Mammary epithelial cell (primary cell): ENCODE measurements at regions of chr6 and their contacts with region 1.

Region 1: GRCh38 chr6:44237813-44238433 is 9.0 kb upstream of the HSP90AB1 start:
- DNase-seq: peak; percentile 57
- H3K4me3 ChIP-seq: peak overlapping the region; percentile 30 to 67 (median 40)
- H3K27ac ChIP-seq: peak overlapping the region; percentile 50
- H3K4me1 ChIP-seq: peaks cover 52% of the 10 kb centered on the region
- H3K27me3 ChIP-seq: no peaks in the 10 kb centered on the region
- CTCF ChIP-seq: peak; percentile 62 to 96

Region 2: DNA sequence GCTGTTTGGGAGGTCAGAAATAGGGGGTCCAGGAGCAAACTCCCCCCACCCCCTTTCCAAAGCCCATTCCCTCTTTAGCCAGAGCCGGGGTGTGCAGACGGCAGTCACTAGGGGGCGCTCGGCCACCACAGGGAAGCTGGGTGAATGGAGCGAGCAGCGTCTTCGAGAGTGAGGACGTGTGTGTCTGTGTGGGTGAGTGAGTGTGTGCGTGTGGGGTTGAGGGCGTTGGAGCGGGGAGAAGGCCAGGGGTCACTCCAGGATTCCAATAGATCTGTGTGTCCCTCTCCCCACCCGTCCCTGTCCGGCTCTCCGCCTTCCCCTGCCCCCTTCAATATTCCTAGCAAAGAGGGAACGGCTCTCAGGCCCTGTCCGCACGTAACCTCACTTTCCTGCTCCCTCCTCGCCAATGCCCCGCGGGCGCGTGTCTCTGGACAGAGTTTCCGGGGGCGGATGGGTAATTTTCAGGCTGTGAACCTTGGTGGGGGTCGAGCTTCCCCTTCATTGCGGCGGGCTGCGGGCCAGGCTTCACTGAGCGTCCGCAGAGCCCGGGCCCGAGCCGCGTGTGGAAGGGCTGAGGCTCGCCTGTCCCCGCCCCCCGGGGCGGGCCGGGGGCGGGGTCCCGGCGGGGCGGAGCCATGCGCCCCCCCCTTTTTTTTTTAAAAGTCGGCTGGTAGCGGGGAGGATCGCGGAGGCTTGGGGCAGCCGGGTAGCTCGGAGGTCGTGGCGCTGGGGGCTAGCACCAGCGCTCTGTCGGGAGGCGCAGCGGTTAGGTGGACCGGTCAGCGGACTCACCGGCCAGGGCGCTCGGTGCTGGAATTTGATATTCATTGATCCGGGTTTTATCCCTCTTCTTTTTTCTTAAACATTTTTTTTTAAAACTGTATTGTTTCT is 468.2 kb before region 1 on chr6 and contains the start of gene VEGFA:
- CTCF ChIA-PET with region 1: no interaction called
- dilution Hi-C with region 1: no loop called
- in situ Hi-C with region 1: no loop called
- intact Hi-C with region 1: loop called (anchors 10 kb)
- DNase-seq: peak; percentile 84
- H3K4me3 ChIP-seq: peak within 1 kb of the TSS; percentile 97 to 98 (median 98)
- H3K27ac ChIP-seq: peak within 1 kb of the TSS; percentile 77
- H3K4me1 ChIP-seq: peaks cover 21% of the 10 kb centered on the region
- H3K27me3 ChIP-seq: no peaks in the 10 kb centered on the region
- CTCF ChIP-seq: peak; percentile 98
- total RNA-seq, gene VEGFA: 161 to 313 TPM

Region 3: DNA sequence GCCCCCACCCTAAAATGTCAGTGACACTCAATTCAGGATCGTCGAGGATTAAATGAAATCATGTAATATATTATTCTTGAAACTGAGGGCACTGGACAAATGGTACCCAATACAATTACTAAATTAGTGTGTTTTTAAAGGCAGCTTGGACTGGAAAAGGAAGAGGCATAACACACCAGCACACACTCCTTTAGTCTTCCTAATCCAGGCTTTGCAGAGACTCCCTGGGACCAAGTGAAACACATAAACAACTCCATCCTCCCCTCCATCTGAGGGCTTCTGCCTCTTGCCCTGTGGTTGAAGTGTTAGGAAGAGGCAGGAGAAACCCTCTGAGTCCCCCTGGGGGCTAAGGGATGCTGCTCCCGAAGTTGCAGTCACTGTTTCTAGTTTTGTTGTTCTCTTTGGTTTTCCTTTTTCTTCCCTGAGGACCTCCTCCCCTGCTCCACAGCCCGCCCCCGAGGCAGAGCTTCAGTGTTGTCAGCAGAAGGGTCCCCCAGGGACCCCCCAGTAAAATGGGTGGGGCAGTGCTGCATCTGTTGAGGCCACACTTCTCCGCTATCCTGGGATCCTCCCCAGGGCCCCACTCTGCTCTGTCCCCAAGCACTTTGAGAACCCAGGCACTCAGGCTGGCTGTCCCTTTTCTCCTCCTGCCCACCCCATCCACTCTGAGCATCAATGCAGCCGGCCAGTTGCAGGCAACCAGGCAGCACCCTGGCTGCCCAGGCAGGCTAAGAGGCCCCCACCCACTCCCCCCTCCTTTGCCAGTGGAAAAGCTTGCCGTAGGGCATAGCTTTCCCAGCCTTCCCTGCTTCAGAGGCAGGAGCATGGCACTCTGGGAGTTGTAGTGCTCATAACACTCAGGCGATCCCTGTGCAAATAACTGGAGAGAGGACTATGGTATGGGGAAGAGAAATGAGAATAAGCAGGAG is 104.7 kb before region 1 on chr6:
- CTCF ChIA-PET with region 1: no interaction called
- dilution Hi-C with region 1: loop called (anchors 5 kb)
- in situ Hi-C with region 1: no loop called
- intact Hi-C with region 1: no loop called
- DNase-seq: peak; percentile 25
- H3K4me3 ChIP-seq: no peak overlapping the region
- H3K27ac ChIP-seq: no peak overlapping the region
- H3K4me1 ChIP-seq: peaks cover 19% of the 10 kb centered on the region
- H3K27me3 ChIP-seq: no peaks in the 10 kb centered on the region
- CTCF ChIP-seq: no peak

Region 4: DNA sequence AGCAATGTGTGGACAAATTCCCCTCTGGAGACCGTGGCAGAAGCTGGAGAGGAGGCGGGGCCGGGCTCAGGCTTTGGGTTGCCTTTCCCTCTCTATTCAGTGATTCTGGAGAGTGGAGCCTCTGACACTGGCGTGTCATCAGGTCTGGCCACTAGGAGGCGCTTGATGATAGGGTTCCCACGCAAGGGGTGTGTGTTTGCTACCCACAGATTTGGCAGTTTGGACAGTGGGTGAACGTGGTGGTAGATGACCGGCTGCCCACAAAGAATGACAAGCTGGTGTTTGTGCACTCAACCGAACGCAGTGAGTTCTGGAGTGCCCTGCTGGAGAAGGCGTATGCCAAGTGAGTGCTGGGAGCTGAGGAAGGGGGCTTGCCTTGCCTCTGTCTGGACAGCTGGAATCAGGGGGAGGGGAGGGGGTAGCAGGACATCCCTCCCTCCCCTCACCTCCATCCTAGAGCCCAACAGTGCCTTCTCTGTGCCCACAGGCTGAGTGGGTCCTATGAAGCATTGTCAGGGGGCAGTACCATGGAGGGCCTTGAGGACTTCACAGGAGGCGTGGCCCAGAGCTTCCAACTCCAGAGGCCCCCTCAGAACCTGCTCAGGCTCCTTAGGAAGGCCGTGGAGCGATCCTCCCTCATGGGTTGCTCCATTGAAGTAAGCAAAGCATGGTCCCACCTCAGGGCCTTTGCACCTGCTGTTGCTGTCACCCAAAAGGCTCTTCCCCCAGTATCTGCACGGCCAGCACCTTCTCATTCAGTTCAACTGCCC is 65.0 kb before region 1 on chr6:
- CTCF ChIA-PET with region 1: interaction called, 8 read pairs
- dilution Hi-C with region 1: no loop called
- in situ Hi-C with region 1: loop called (anchors 10 kb)
- intact Hi-C with region 1: loop called (anchors 1 kb)
- DNase-seq: peak; percentile 69
- H3K4me3 ChIP-seq: no peak overlapping the region
- H3K27ac ChIP-seq: no peak overlapping the region
- H3K4me1 ChIP-seq: peaks cover 7% of the 10 kb centered on the region
- H3K27me3 ChIP-seq: no peaks in the 10 kb centered on the region
- CTCF ChIP-seq: peak; percentile 92 to 94

Region 5: GRCh38 chr6:44221291-44221960 is 16.5 kb before region 1 on chr6:
- CTCF ChIA-PET with region 1: interaction called, 5 read pairs
- dilution Hi-C with region 1: no loop called
- in situ Hi-C with region 1: no loop called
- intact Hi-C with region 1: loop called (anchors 1 kb)
- DNase-seq: peak; percentile 81
- H3K4me3 ChIP-seq: no peak overlapping the region
- H3K27ac ChIP-seq: no peak overlapping the region
- H3K4me1 ChIP-seq: peaks cover 57% of the 10 kb centered on the region
- H3K27me3 ChIP-seq: no peaks in the 10 kb centered on the region
- CTCF ChIP-seq: peak; percentile 86 to 95

Region 6: GRCh38 chr6:44338228-44339122 is 100.6 kb after region 1 on chr6:
- CTCF ChIA-PET with region 1: no interaction called
- dilution Hi-C with region 1: loop called (anchors 5 kb)
- in situ Hi-C with region 1: no loop called
- intact Hi-C with region 1: no loop called
- DNase-seq: peak; percentile 48
- H3K4me3 ChIP-seq: no peak overlapping the region
- H3K27ac ChIP-seq: no peak overlapping the region
- H3K4me1 ChIP-seq: peaks cover 18% of the 10 kb centered on the region
- H3K27me3 ChIP-seq: peaks cover 2% of the 10 kb centered on the region
- CTCF ChIP-seq: peak; percentile 62 to 82